GM13976 (cell line): ENCODE measurements at regions of chr1 and their contacts with region 1.

Region 1: GRCh38 chr1:150162862-150163706 is 13.4 kb downstream of the PLEKHO1 start:
- DNase-seq: peak; percentile 77
- CTCF ChIP-seq: no peak

Region 2: GRCh38 chr1:149962123-149962548 is 200.9 kb before region 1 on chr1:
- in situ Hi-C with region 1: loop called (anchors 25 kb)
- DNase-seq: peak; percentile 66
- CTCF ChIP-seq: peak; percentile 57

Region 3: DNA sequence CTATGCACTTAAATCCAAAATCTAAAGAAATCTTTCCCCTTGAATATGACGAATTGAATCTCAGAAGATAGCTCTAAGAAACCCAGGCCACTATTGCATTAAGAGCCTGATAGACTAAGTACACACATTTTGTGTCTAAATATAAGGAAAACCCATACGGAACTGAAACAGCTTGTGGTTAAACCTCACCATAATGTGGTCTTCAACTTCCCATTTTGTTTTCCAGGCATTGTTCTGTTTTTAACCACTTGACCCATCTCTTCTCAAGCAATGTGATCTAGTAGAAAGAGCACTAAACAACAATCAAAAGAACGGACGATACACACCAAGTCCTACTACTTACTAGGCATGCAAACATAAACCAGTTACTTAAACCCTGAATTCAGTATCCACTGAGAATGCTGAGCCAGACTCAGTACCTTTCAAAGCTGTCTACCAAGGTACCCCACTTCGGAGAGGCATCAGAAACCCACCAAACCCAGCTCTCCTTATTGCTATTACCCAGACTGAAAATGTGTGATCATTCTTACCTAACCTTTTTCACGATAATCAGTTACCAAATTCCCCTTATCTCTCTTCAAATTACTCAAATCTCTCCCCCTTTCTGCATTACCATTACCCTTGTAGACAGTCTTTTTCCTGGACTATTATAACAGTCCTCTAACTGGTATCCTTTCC is 165.4 kb before region 1 on chr1:
- in situ Hi-C with region 1: no loop called
- DNase-seq: peak; percentile 49
- CTCF ChIP-seq: no peak